Right lobe of liver (tissue), 6 donors: ENCODE measurements at regions of chr1 and their contacts with region 1.

Region 1: GRCh38 chr1:224329842-224330753 is at the start of gene NVL:
- DNase-seq: peak; percentile 87 to 89 (median 89)
- ATAC-seq: peak; percentile 95 to 97 (median 96)
- H3K4me3 ChIP-seq: peak within 1 kb of the TSS; percentile 84 to 95 (median 87)
- H3K27ac ChIP-seq: peak within 1 kb of the TSS; percentile 93 to 97 (median 97)
- H3K4me1 ChIP-seq: peaks cover 0 to 23% (median 3%) of the 10 kb centered on the region in 4 donors
- H3K27me3 ChIP-seq: no peaks in the 10 kb centered on the region
- CTCF ChIP-seq: no peak
- POLR2A ChIP-seq: peak; percentile 59
- total RNA-seq, gene NVL: 4.5 to 8.9 (median 6.8) TPM

Region 2: GRCh38 chr1:224113918-224114786 is 215.9 kb before region 1 on chr1 and contains the start of gene FBXO28:
- intact Hi-C with region 1: loop called in 1 of 2 experiments (anchors 10 kb)
- DNase-seq: peak; percentile 94 to 97 (median 96)
- ATAC-seq: peak; percentile 94 to 98 (median 96)
- H3K4me3 ChIP-seq: peak within 1 kb of the TSS; percentile 90 to 98 (median 90)
- H3K27ac ChIP-seq: peak within 1 kb of the TSS; percentile 94 to 97 (median 95)
- H3K4me1 ChIP-seq: peaks cover 0 to 37% (median 12%) of the 10 kb centered on the region in 4 donors
- H3K27me3 ChIP-seq: no peaks in the 10 kb centered on the region
- CTCF ChIP-seq: peak in 1 of 4 donors; percentile 2
- POLR2A ChIP-seq: peak; percentile 86
- total RNA-seq, gene FBXO28: 11.5 to 20.9 (median 15.3) TPM